Activated CD8-positive, alpha-beta T cell treated with anti-CD3 and anti-CD28 coated beads for 36 hours (primary cell): ENCODE measurements at regions of chr22 and their contacts with region 1.

Region 1: DNA sequence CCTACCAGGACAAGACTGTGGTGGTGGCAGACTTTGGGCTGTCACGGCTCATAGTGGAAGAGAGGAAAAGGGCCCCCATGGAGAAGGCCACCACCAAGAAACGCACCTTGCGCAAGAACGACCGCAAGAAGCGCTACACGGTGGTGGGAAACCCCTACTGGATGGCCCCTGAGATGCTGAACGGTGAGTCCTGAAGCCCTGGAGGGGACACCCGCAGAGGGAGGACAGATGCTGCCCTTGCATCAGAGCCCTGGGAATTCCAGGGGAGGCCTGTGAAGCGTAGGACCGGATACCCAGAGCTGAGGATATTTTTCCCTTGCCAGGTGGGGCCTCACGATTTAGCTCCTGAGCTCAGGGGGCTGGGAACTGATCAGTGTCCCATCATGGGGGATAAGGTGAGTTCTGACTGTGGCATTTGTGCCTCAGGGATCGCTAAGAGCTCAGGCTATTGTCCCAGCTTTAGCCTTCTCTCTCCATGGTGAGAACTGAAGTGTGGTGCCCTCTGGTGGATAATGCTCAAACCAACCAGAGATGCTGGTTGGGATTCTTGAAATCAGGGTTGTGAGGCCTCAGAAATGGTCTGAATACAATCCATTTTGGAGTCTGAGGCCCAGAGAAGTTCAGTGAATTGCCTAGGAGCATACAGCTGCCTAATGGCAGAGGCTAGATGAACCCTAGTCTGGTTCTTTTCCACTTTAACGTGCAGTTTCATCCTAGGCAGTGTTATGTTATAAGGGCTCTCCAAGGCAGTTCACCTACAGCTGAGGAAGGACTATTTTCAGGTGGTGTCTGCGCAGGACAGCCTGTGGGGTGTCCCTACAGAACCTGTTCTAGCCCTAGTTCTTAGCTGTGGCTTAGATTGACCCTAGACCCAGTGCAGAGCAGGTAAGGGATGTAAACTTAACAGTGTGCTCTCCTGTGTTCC is 19.5 kb downstream of the PIK3IP1 start:
- DNase-seq: peak; percentile 66
- ATAC-seq: peak; percentile 85
- H3K4me3 Mint-ChIP-seq: no peak overlapping the region
- H3K27ac Mint-ChIP-seq: no peak overlapping the region
- H3K4me1 Mint-ChIP-seq: peaks cover 40% of the 10 kb centered on the region
- H3K27me3 Mint-ChIP-seq: no peaks in the 10 kb centered on the region
- CTCF ChIP-seq: peak; percentile 57

Region 2: GRCh38 chr22:31107178-31107893 is 165.4 kb before region 1 on chr22 and contains the start of gene SELENOM:
- CTCF ChIA-PET with region 1: interaction called, 11 read pairs
- POLR2A ChIA-PET with region 1: interaction called, 3 read pairs
- intact Hi-C with region 1: no loop called
- DNase-seq: peak; percentile 89
- ATAC-seq: peak; percentile 95
- H3K4me3 Mint-ChIP-seq: peak within 1 kb of the TSS; percentile 78
- H3K27ac Mint-ChIP-seq: peak within 1 kb of the TSS; percentile 80
- H3K4me1 Mint-ChIP-seq: peaks cover 18% of the 10 kb centered on the region
- H3K27me3 Mint-ChIP-seq: no peaks in the 10 kb centered on the region
- CTCF ChIP-seq: peak; percentile 83
- total RNA-seq, gene SELENOM: 3.6 to 5.8 TPM

Region 3: GRCh38 chr22:31211862-31212730 is 60.7 kb before region 1 on chr22 and contains the start of gene LIMK2:
- CTCF ChIA-PET with region 1: interaction called, 51 read pairs
- POLR2A ChIA-PET with region 1: interaction called, 8 read pairs
- intact Hi-C with region 1: no loop called
- DNase-seq: peak; percentile 99
- ATAC-seq: peak; percentile 99
- H3K4me3 Mint-ChIP-seq: peak within 1 kb of the TSS; percentile 82
- H3K27ac Mint-ChIP-seq: peak within 1 kb of the TSS; percentile 82
- H3K4me1 Mint-ChIP-seq: peaks cover 34% of the 10 kb centered on the region
- H3K27me3 Mint-ChIP-seq: no peaks in the 10 kb centered on the region
- CTCF ChIP-seq: peak; percentile 83
- total RNA-seq, gene LIMK2: 23.2 to 25.5 TPM

Region 4: GRCh38 chr22:31248138-31248745 is 24.5 kb before region 1 on chr22:
- CTCF ChIA-PET with region 1: interaction called, 110 read pairs
- POLR2A ChIA-PET with region 1: no interaction called
- intact Hi-C with region 1: no loop called
- DNase-seq: peak; percentile 80
- ATAC-seq: peak; percentile 100
- H3K4me3 Mint-ChIP-seq: peak overlapping the region; percentile 58
- H3K27ac Mint-ChIP-seq: peak overlapping the region; percentile 49
- H3K4me1 Mint-ChIP-seq: peaks cover 18% of the 10 kb centered on the region
- H3K27me3 Mint-ChIP-seq: no peaks in the 10 kb centered on the region
- CTCF ChIP-seq: no peak

Region 5: DNA sequence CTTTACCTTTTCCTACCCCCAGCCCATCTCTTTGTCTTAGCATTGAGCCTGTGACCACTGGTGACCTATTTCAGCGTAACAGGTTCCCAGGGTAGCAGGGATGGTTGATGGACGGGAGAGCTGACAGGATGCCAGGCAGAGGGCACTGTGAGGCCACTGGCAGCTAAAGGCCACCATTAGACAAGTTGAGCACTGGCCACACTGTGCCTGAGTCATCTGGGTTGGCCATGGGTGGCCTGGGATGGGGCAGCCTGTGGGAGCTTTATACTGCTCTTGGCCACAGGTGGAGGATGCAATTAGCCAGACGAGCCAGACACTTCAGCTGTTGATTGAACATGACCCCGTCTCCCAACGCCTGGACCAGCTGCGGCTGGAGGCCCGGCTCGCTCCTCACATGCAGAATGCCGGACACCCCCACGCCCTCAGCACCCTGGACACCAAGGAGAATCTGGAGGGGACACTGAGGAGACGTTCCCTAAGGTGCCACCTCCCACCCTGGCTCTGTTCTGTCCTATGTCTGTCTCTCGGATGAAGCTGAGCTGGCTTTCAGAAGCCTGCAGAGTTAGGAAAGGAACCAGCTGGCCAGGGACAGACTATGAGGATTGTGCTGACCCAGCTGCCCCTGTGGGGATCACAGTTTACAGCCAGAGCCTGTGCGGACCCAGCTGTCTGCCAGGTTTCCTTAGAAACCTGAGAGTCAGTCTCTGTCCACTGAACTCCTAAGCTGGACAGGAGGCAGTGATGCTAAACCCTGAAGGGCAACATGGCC is 10.3 kb before region 1 on chr22:
- CTCF ChIA-PET with region 1: interaction called, 110 read pairs
- POLR2A ChIA-PET with region 1: interaction called, 5 read pairs
- intact Hi-C with region 1: no loop called
- DNase-seq: no peak
- ATAC-seq: no peak
- H3K4me3 Mint-ChIP-seq: no peak overlapping the region
- H3K27ac Mint-ChIP-seq: no peak overlapping the region
- H3K4me1 Mint-ChIP-seq: no peaks in the 10 kb centered on the region
- H3K27me3 Mint-ChIP-seq: no peaks in the 10 kb centered on the region
- CTCF ChIP-seq: no peak